Activated CD4-positive, alpha-beta memory T cell treated with anti-CD3 and anti-CD28 coated beads for 36 hours (primary cell): ENCODE measurements at regions of chr16 and their contacts with region 1.

Region 1: GRCh38 chr16:87713451-87714229 is 52.1 kb downstream of the KLHDC4 start:
- DNase-seq: peak; percentile 84
- H3K4me3 Mint-ChIP-seq: no peak overlapping the region
- H3K27ac Mint-ChIP-seq: peak overlapping the region; percentile 83
- H3K4me1 Mint-ChIP-seq: peaks cover 23% of the 10 kb centered on the region
- H3K27me3 Mint-ChIP-seq: no peaks in the 10 kb centered on the region

Region 2: GRCh38 chr16:87698241-87698640 is 15.4 kb before region 1 on chr16:
- CTCF ChIA-PET with region 1: interaction called, 7 read pairs
- POLR2A ChIA-PET with region 1: no interaction called
- intact Hi-C with region 1: loop called (anchors 1 kb)
- DNase-seq: peak; percentile 60
- H3K4me3 Mint-ChIP-seq: no peak overlapping the region
- H3K27ac Mint-ChIP-seq: peak overlapping the region; percentile 87
- H3K4me1 Mint-ChIP-seq: peaks cover 45% of the 10 kb centered on the region
- H3K27me3 Mint-ChIP-seq: no peaks in the 10 kb centered on the region